ENCODE measurements at regions of chr20 and their contacts with region 1.

Region 1: GRCh38 chr20:13546497-13547131 is 92.1 kb downstream of the TASP1 start:
- DNase-seq: peak; percentile 39 to 93
- H3K4me3 ChIP-seq: no peak overlapping the region
- H3K27ac ChIP-seq: no peak overlapping the region
- H3K4me1 ChIP-seq: no peaks in the 10 kb centered on the region
- H3K27me3 ChIP-seq: no peaks in the 10 kb centered on the region
- CTCF ChIP-seq: peak; percentile 63 to 84 (median 81)
- EP300 ChIP-seq: no peak
- POLR2A ChIP-seq: no peak
- RAD21 ChIP-seq: peak; percentile 93

Region 2: DNA sequence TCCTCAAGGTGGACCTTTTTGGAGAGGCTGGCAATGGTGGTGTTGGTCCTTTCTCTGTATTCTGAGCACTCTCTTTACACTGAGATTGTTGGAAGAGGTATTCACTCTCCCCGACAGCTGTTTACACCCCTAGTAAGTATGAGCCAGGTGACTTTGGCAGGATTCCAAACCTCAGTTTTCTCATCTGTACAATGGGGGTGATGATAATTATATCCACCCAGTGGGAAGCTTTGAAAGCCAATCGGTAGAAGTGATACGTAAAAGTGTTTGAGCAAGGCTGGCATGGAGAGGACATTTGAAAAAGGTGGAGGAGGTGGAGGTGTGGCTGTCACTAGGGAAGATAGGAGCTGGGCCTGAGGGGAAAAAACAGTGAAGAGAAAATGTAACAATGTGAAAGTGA is 290.0 kb before region 1 on chr20:
- CTCF ChIA-PET with region 1: interaction called, 12 read pairs
- POLR2A ChIA-PET with region 1: no interaction called
- DNase-seq: no peak
- H3K4me3 ChIP-seq: no peak overlapping the region
- H3K27ac ChIP-seq: no peak overlapping the region
- H3K4me1 ChIP-seq: no peaks in the 10 kb centered on the region
- H3K27me3 ChIP-seq: no peaks in the 10 kb centered on the region
- CTCF ChIP-seq: no peak
- EP300 ChIP-seq: no peak
- POLR2A ChIP-seq: no peak
- RAD21 ChIP-seq: no peak

Region 3: GRCh38 chr20:13302647-13303450 is 243.8 kb before region 1 on chr20:
- CTCF ChIA-PET with region 1: interaction called, 13 read pairs
- POLR2A ChIA-PET with region 1: no interaction called
- DNase-seq: peak in 1 of 2 experiments; percentile 67
- H3K4me3 ChIP-seq: no peak overlapping the region
- H3K27ac ChIP-seq: no peak overlapping the region
- H3K4me1 ChIP-seq: no peaks in the 10 kb centered on the region
- H3K27me3 ChIP-seq: no peaks in the 10 kb centered on the region
- CTCF ChIP-seq: peak; percentile 66 to 77 (median 74)
- EP300 ChIP-seq: no peak
- POLR2A ChIP-seq: no peak
- RAD21 ChIP-seq: peak; percentile 67 to 70

Region 4: GRCh38 chr20:13331536-13331935 is 215.1 kb before region 1 on chr20:
- CTCF ChIA-PET with region 1: interaction called, 19 read pairs
- POLR2A ChIA-PET with region 1: no interaction called
- DNase-seq: no peak
- H3K4me3 ChIP-seq: no peak overlapping the region
- H3K27ac ChIP-seq: no peak overlapping the region
- H3K4me1 ChIP-seq: no peaks in the 10 kb centered on the region
- H3K27me3 ChIP-seq: no peaks in the 10 kb centered on the region
- CTCF ChIP-seq: no peak
- EP300 ChIP-seq: no peak
- POLR2A ChIP-seq: no peak
- RAD21 ChIP-seq: no peak

Region 5: GRCh38 chr20:13447385-13448180 is 99.0 kb before region 1 on chr20:
- CTCF ChIA-PET with region 1: no interaction called
- POLR2A ChIA-PET with region 1: no interaction called
- DNase-seq: no peak
- H3K4me3 ChIP-seq: no peak overlapping the region
- H3K27ac ChIP-seq: no peak overlapping the region
- H3K4me1 ChIP-seq: no peaks in the 10 kb centered on the region
- H3K27me3 ChIP-seq: no peaks in the 10 kb centered on the region
- CTCF ChIP-seq: no peak
- EP300 ChIP-seq: no peak
- POLR2A ChIP-seq: no peak
- RAD21 ChIP-seq: no peak

Region 6: GRCh38 chr20:13458860-13459451 is 87.7 kb before region 1 on chr20:
- CTCF ChIA-PET with region 1: interaction called, 52 read pairs
- POLR2A ChIA-PET with region 1: no interaction called
- DNase-seq: no peak
- H3K4me3 ChIP-seq: no peak overlapping the region
- H3K27ac ChIP-seq: no peak overlapping the region
- H3K4me1 ChIP-seq: peaks cover 0 to 3% (median 0%) of the 10 kb centered on the region in 4 experiments; a peak in 1 of 7 replicates
- H3K27me3 ChIP-seq: no peaks in the 10 kb centered on the region
- CTCF ChIP-seq: peak; percentile 14 to 83 (median 56)
- EP300 ChIP-seq: no peak
- POLR2A ChIP-seq: no peak
- RAD21 ChIP-seq: peak; percentile 66 to 73

Measured in H1 (cell line).